Esophagus muscularis mucosa (tissue), 4 donors: ENCODE measurements at regions of chr5 and their contacts with region 1.

Region 1: GRCh38 chr5:131170540-131171275 is at the start of gene LYRM7:
- DNase-seq: peak; percentile 99
- H3K4me3 ChIP-seq: peak within 1 kb of the TSS; percentile 61 to 80 (median 70)
- H3K27ac ChIP-seq: peak within 1 kb of the TSS; percentile 77 to 89 (median 80)
- H3K4me1 ChIP-seq: peaks cover 16 to 28% (median 21%) of the 10 kb centered on the region in 4 donors
- H3K27me3 ChIP-seq: no peaks in the 10 kb centered on the region
- CTCF ChIP-seq: no peak
- EP300 ChIP-seq: no peak
- POLR2A ChIP-seq: no peak
- total RNA-seq, gene LYRM7: 5.3 to 9.1 (median 8.1) TPM

Region 2: DNA sequence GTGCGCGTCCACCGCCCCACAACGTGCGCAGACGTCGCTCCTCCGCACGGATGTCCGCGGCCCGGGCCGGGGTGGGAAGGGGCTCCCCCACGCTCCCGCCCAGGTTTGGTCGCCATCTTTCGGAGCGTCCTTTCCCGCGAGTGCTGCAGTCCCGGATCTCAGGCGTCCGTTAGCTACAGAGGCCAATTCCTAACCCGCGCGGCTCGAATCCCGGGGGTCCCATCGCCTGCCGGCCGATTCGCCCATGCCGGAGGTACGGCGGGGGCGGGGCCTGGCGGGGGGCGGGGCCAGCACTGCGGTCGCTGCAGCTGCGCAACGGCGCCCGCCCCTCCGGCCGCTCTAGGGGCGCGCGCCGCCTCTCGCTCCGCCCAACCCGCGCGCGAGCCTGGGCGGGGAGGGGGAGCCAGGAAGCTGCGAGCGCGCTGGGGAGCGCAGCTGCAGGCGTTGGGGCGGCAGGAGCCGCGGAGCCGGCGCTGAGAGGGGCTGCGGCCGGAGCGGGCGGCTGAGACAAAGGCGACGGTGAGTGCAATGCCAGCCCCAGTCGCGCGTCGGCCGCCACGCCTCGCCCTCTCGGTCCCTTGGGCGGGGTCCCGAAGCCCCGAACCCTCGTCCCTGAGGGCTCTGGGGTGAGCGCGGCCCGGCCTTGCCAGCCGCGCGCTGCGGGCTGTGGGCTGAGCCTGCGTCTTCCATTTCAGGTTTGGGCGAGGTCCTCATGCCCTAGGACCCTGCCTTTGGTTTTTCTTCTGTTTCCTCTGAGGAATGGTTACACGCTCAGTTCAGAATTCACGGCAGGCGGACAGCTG is 93.1 kb after region 1 on chr5 and contains the start of gene CDC42SE2:
- intact Hi-C with region 1: loop called (anchors 2 kb)
- DNase-seq: peak; percentile 93
- H3K4me3 ChIP-seq: peak within 1 kb of the TSS; percentile 76 to 100 (median 91)
- H3K27ac ChIP-seq: peak within 1 kb of the TSS; percentile 84 to 94 (median 90)
- H3K4me1 ChIP-seq: peaks cover 5 to 33% (median 30%) of the 10 kb centered on the region in 4 donors
- H3K27me3 ChIP-seq: no peaks in the 10 kb centered on the region
- CTCF ChIP-seq: no peak
- EP300 ChIP-seq: no peak
- POLR2A ChIP-seq: peak; percentile 80
- total RNA-seq, gene CDC42SE2: 23.1 to 28.0 (median 25.4) TPM